ENCODE measurements at regions of chr16 and their contacts with region 1.

Region 1: GRCh38 chr16:53743149-53743566 is 39.2 kb downstream of the FTO start:
- DNase-seq: peak; percentile 44
- H3K4me3 Mint-ChIP-seq: no peak overlapping the region
- H3K27ac Mint-ChIP-seq: no peak overlapping the region
- H3K4me1 Mint-ChIP-seq: peaks cover 36% of the 10 kb centered on the region
- H3K27me3 Mint-ChIP-seq: no peaks in the 10 kb centered on the region

Region 2: GRCh38 chr16:53541326-53541725 is 201.8 kb before region 1 on chr16:
- CTCF ChIA-PET with region 1: no interaction called
- intact Hi-C with region 1: no loop called
- DNase-seq: no peak
- H3K4me3 Mint-ChIP-seq: no peak overlapping the region
- H3K27ac Mint-ChIP-seq: no peak overlapping the region
- H3K4me1 Mint-ChIP-seq: peaks cover 17% of the 10 kb centered on the region
- H3K27me3 Mint-ChIP-seq: peaks cover 21% of the 10 kb centered on the region

Region 3: GRCh38 chr16:53664724-53665345 is 78.3 kb before region 1 on chr16:
- CTCF ChIA-PET with region 1: no interaction called
- intact Hi-C with region 1: loop called (anchors 1 kb)
- DNase-seq: peak; percentile 38
- H3K4me3 Mint-ChIP-seq: no peak overlapping the region
- H3K27ac Mint-ChIP-seq: no peak overlapping the region
- H3K4me1 Mint-ChIP-seq: peaks cover 11% of the 10 kb centered on the region
- H3K27me3 Mint-ChIP-seq: no peaks in the 10 kb centered on the region

Region 4: DNA sequence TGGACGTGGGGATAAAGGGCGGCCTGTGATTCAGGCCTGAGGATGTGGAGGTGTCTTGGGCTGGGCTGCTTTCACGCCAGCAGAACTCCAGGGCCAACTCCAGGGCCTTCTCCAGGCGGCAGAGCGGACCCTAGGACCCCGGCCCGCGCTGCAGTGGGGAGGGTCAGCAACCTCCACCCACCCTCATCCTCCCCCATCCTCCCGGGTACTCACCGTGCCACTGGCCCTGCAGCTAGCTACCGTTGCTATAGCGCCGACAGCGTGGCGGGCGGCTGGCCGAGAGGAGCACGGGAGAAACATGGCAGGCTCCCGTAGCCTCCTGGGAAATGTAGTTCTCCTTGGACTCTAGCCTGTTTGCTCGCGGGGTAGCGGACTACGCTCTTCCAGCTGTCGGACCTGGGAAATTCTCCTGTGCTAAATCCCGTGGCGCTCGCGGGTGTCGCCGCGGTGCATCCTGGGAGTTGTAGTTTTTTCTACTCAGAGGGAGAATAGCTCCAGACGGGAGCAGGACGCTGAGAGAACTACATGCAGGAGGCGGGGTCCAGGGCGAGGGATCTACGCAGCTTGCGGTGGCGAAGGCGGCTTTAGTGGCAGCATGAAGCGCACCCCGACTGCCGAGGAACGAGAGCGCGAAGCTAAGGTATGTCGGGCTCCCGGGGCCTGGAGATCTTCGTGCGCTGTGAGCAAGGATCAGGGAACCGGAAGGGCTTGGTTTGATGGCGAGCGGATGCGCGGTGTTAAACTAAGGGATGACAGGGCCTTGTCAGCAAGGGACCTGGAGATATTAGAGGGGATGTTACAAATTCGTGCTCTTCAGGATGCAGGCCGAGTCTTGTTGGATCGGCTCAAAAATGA is 39.3 kb before region 1 on chr16 and contains the starts of genes FTO and RPGRIP1L:
- CTCF ChIA-PET with region 1: interaction called, 4 read pairs
- intact Hi-C with region 1: loop called (anchors 1 kb)
- DNase-seq: peak; percentile 99
- H3K4me3 Mint-ChIP-seq: peak within 1 kb of the TSS; percentile 100
- H3K27ac Mint-ChIP-seq: peak within 1 kb of the TSS; percentile 89
- H3K4me1 Mint-ChIP-seq: peaks cover 30% of the 10 kb centered on the region
- H3K27me3 Mint-ChIP-seq: no peaks in the 10 kb centered on the region
- total RNA-seq, gene FTO: 60.2 to 63.9 TPM
- total RNA-seq, gene RPGRIP1L: 4.3 to 5.2 TPM

Region 5: DNA sequence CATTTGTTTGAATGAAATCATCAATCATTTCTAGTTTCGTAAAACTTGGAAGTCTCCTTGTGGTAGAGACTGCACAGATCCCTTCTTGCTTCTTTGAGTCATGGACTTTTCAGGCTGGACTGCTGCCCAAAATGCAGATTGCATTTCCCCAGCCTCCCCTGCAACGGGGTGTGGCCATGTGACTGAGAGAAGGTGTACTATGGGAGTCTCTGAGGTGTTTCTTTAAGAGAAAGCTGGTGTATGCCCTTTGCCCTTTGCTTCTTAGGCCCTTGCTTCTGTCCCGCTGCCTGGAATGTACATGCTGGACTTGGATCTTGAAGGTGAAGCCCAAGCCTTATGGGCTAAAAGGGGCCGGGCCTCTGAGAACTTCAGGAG is 12.4 kb after region 1 on chr16:
- CTCF ChIA-PET with region 1: interaction called, 12 read pairs
- intact Hi-C with region 1: no loop called
- DNase-seq: no peak
- H3K4me3 Mint-ChIP-seq: no peak overlapping the region
- H3K27ac Mint-ChIP-seq: no peak overlapping the region
- H3K4me1 Mint-ChIP-seq: peaks cover 10% of the 10 kb centered on the region
- H3K27me3 Mint-ChIP-seq: no peaks in the 10 kb centered on the region

Region 6: GRCh38 chr16:53773150-53773846 is 30.1 kb after region 1 on chr16:
- CTCF ChIA-PET with region 1: interaction called, 14 read pairs
- intact Hi-C with region 1: no loop called
- DNase-seq: peak; percentile 40
- H3K4me3 Mint-ChIP-seq: no peak overlapping the region
- H3K27ac Mint-ChIP-seq: no peak overlapping the region
- H3K4me1 Mint-ChIP-seq: peaks cover 31% of the 10 kb centered on the region
- H3K27me3 Mint-ChIP-seq: no peaks in the 10 kb centered on the region

Region 7: GRCh38 chr16:53822936-53823529 is 79.9 kb after region 1 on chr16:
- CTCF ChIA-PET with region 1: interaction called, 4 read pairs
- intact Hi-C with region 1: loop called (anchors 1 kb)
- DNase-seq: peak; percentile 34
- H3K4me3 Mint-ChIP-seq: no peak overlapping the region
- H3K27ac Mint-ChIP-seq: no peak overlapping the region
- H3K4me1 Mint-ChIP-seq: peaks cover 19% of the 10 kb centered on the region
- H3K27me3 Mint-ChIP-seq: no peaks in the 10 kb centered on the region

Region 8: GRCh38 chr16:53913099-53913870 is 170.1 kb after region 1 on chr16:
- CTCF ChIA-PET with region 1: no interaction called
- intact Hi-C with region 1: loop called (anchors 1 kb)
- DNase-seq: peak; percentile 42
- H3K4me3 Mint-ChIP-seq: peak overlapping the region; percentile 23
- H3K27ac Mint-ChIP-seq: peak overlapping the region; percentile 79
- H3K4me1 Mint-ChIP-seq: peaks cover 8% of the 10 kb centered on the region
- H3K27me3 Mint-ChIP-seq: no peaks in the 10 kb centered on the region